ENCODE measurements at regions of chr1 and their contacts with region 1.

Region 1: DNA sequence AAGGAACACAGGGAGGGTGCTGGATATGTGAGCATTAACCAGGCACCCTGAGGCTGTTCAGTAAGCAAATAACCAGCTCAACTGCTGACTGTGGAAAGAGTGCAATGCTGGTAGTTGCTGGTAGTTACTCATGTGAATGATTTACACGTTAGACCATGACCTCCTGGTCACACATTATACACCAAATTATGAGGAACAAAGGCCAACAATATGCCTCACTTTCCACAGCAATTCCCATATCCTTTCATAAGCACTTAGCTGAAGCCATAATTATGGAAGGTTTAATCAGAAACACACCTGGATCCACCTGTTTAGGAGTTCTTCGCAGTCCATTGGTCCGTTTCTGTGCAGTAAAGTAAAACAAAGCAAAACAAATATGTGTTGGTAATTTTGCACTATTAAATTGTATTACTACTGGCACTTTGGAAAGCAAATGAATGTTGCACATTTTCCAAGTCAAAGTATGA is 281.8 kb downstream of the VAV3 start:
- DNase-seq: peak; percentile 58
- H3K4me3 Mint-ChIP-seq: peak overlapping the region; percentile 55
- H3K27ac Mint-ChIP-seq: peak overlapping the region; percentile 76
- H3K4me1 Mint-ChIP-seq: peaks cover 10% of the 10 kb centered on the region
- H3K27me3 Mint-ChIP-seq: no peaks in the 10 kb centered on the region
- CTCF ChIP-seq: no peak

Region 2: DNA sequence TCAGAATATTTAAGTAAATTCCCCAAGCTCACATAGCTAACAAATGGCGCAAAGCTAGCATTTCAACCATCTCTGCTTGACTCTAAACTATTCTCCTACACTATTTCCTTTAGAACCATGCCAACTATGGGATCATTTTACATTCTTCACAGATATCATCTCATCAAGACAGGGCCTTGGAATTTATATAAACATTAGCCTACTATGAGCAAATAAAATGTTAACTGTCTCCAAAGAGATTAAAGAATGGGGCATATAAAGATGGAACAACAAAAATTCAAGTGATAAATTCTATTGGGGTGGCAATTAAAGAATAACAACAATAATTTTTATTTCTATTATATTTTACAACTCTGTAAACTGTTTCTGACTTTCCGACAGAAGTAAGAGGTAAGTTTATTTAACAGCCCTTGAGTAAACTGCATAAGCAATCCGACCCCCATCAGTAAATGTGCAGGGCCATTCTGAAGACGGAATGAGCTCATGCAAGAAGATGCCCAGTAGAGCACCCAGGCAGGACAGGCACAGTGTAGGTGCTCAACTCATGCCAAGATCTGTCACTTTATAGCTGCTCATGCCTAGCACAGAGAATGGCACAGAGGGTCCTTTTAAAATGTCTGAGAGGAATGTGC is 19.8 kb after region 1 on chr1:
- CTCF ChIA-PET with region 1: no interaction called
- intact Hi-C with region 1: no loop called
- DNase-seq: no peak
- H3K4me3 Mint-ChIP-seq: no peak overlapping the region
- H3K27ac Mint-ChIP-seq: no peak overlapping the region
- H3K4me1 Mint-ChIP-seq: no peaks in the 10 kb centered on the region
- H3K27me3 Mint-ChIP-seq: no peaks in the 10 kb centered on the region
- CTCF ChIP-seq: no peak

Region 3: GRCh38 chr1:107739228-107739627 is 56.0 kb after region 1 on chr1:
- CTCF ChIA-PET with region 1: no interaction called
- intact Hi-C with region 1: loop called (anchors 5 kb)
- DNase-seq: no peak
- H3K4me3 Mint-ChIP-seq: no peak overlapping the region
- H3K27ac Mint-ChIP-seq: no peak overlapping the region
- H3K4me1 Mint-ChIP-seq: no peaks in the 10 kb centered on the region
- H3K27me3 Mint-ChIP-seq: no peaks in the 10 kb centered on the region
- CTCF ChIP-seq: no peak

Measured in Calu3 (cell line).